Activated CD4-positive, alpha-beta memory T cell treated with anti-CD3 and anti-CD28 coated beads for 36 hours (primary cell): ENCODE measurements at regions of chr17 and their contacts with region 1.

Region 1: GRCh38 chr17:54992797-54993639 is 24.5 kb downstream of the STXBP4 start:
- DNase-seq: no peak
- H3K4me3 Mint-ChIP-seq: no peak overlapping the region
- H3K27ac Mint-ChIP-seq: no peak overlapping the region
- H3K4me1 Mint-ChIP-seq: no peaks in the 10 kb centered on the region
- H3K27me3 Mint-ChIP-seq: no peaks in the 10 kb centered on the region

Region 2: GRCh38 chr17:54948380-54948779 is 44.6 kb before region 1 on chr17:
- CTCF ChIA-PET with region 1: no interaction called
- POLR2A ChIA-PET with region 1: no interaction called
- intact Hi-C with region 1: no loop called
- DNase-seq: no peak
- H3K4me3 Mint-ChIP-seq: no peak overlapping the region
- H3K27ac Mint-ChIP-seq: no peak overlapping the region
- H3K4me1 Mint-ChIP-seq: no peaks in the 10 kb centered on the region
- H3K27me3 Mint-ChIP-seq: peaks cover 12% of the 10 kb centered on the region

Region 3: GRCh38 chr17:55005520-55005919 is 12.5 kb after region 1 on chr17:
- CTCF ChIA-PET with region 1: interaction called, 15 read pairs
- POLR2A ChIA-PET with region 1: no interaction called
- intact Hi-C with region 1: no loop called
- DNase-seq: no peak
- H3K4me3 Mint-ChIP-seq: no peak overlapping the region
- H3K27ac Mint-ChIP-seq: no peak overlapping the region
- H3K4me1 Mint-ChIP-seq: no peaks in the 10 kb centered on the region
- H3K27me3 Mint-ChIP-seq: no peaks in the 10 kb centered on the region

Region 4: GRCh38 chr17:55053855-55054254 is 60.8 kb after region 1 on chr17:
- CTCF ChIA-PET with region 1: no interaction called
- POLR2A ChIA-PET with region 1: no interaction called
- intact Hi-C with region 1: no loop called
- DNase-seq: no peak
- H3K4me3 Mint-ChIP-seq: no peak overlapping the region
- H3K27ac Mint-ChIP-seq: no peak overlapping the region
- H3K4me1 Mint-ChIP-seq: no peaks in the 10 kb centered on the region
- H3K27me3 Mint-ChIP-seq: no peaks in the 10 kb centered on the region

Region 5: GRCh38 chr17:55144518-55144917 is 151.5 kb after region 1 on chr17:
- CTCF ChIA-PET with region 1: no interaction called
- POLR2A ChIA-PET with region 1: no interaction called
- intact Hi-C with region 1: no loop called
- DNase-seq: no peak
- H3K4me3 Mint-ChIP-seq: no peak overlapping the region
- H3K27ac Mint-ChIP-seq: no peak overlapping the region
- H3K4me1 Mint-ChIP-seq: no peaks in the 10 kb centered on the region
- H3K27me3 Mint-ChIP-seq: no peaks in the 10 kb centered on the region

Region 6: GRCh38 chr17:55295411-55296170 is 302.6 kb after region 1 on chr17:
- CTCF ChIA-PET with region 1: interaction called, 54 read pairs
- POLR2A ChIA-PET with region 1: no interaction called
- intact Hi-C with region 1: loop called (anchors 1 kb)
- DNase-seq: peak; percentile 72
- H3K4me3 Mint-ChIP-seq: no peak overlapping the region
- H3K27ac Mint-ChIP-seq: no peak overlapping the region
- H3K4me1 Mint-ChIP-seq: peaks cover under 1% of the 10 kb centered on the region
- H3K27me3 Mint-ChIP-seq: no peaks in the 10 kb centered on the region

Region 7: GRCh38 chr17:55341432-55341831 is 348.4 kb after region 1 on chr17:
- CTCF ChIA-PET with region 1: interaction called, 12 read pairs
- POLR2A ChIA-PET with region 1: no interaction called
- intact Hi-C with region 1: no loop called
- DNase-seq: peak; percentile 30
- H3K4me3 Mint-ChIP-seq: no peak overlapping the region
- H3K27ac Mint-ChIP-seq: no peak overlapping the region
- H3K4me1 Mint-ChIP-seq: peaks cover 46% of the 10 kb centered on the region
- H3K27me3 Mint-ChIP-seq: peaks cover 25% of the 10 kb centered on the region

Region 8: DNA sequence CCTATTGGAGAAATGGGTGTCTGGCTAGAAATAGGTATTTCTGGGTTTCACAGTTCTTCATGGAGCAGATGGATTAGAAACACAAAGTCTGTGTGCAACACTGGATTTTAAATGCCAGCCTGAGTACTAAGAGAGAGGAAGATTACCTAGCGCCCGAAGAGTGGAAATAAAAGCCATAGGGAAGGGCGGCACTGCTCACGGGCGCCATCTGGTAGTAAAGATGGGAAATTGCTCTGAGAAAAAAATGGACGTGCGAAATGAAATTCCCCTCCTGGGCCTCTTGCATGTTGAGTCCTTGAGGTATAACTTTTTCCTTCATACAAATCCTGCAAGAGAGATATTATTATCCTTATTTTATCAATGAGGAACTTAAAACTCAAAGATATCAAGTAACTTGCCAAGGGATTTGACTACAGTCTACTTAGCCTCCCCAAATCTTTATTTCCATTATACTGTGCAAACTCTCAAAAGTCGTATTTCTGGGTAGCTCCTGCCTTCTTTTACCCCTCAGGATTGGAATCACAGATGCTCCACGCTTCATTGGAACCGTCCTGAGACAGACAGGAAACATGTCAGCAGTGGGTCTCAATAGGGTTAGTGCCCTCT is 355.8 kb after region 1 on chr17:
- CTCF ChIA-PET with region 1: interaction called, 92 read pairs
- POLR2A ChIA-PET with region 1: no interaction called
- intact Hi-C with region 1: loop called (anchors 1 kb)
- DNase-seq: peak; percentile 58
- H3K4me3 Mint-ChIP-seq: no peak overlapping the region
- H3K27ac Mint-ChIP-seq: no peak overlapping the region
- H3K4me1 Mint-ChIP-seq: peaks cover 33% of the 10 kb centered on the region
- H3K27me3 Mint-ChIP-seq: peaks cover 2% of the 10 kb centered on the region

Region 9: GRCh38 chr17:55356434-55357328 is 363.7 kb after region 1 on chr17:
- CTCF ChIA-PET with region 1: interaction called, 92 read pairs
- POLR2A ChIA-PET with region 1: no interaction called
- intact Hi-C with region 1: no loop called
- DNase-seq: peak; percentile 81
- H3K4me3 Mint-ChIP-seq: no peak overlapping the region
- H3K27ac Mint-ChIP-seq: no peak overlapping the region
- H3K4me1 Mint-ChIP-seq: peaks cover 2% of the 10 kb centered on the region
- H3K27me3 Mint-ChIP-seq: peaks cover 4% of the 10 kb centered on the region

Region 10: GRCh38 chr17:55513885-55514591 is 521.0 kb after region 1 on chr17:
- CTCF ChIA-PET with region 1: interaction called, 9 read pairs
- POLR2A ChIA-PET with region 1: no interaction called
- intact Hi-C with region 1: loop called (anchors 1 kb)
- DNase-seq: peak; percentile 75
- H3K4me3 Mint-ChIP-seq: no peak overlapping the region
- H3K27ac Mint-ChIP-seq: no peak overlapping the region
- H3K4me1 Mint-ChIP-seq: no peaks in the 10 kb centered on the region
- H3K27me3 Mint-ChIP-seq: peaks cover 6% of the 10 kb centered on the region